HAP-1 (cell line): ENCODE measurements at regions of chr14 and their contacts with region 1.

Region 1: DNA sequence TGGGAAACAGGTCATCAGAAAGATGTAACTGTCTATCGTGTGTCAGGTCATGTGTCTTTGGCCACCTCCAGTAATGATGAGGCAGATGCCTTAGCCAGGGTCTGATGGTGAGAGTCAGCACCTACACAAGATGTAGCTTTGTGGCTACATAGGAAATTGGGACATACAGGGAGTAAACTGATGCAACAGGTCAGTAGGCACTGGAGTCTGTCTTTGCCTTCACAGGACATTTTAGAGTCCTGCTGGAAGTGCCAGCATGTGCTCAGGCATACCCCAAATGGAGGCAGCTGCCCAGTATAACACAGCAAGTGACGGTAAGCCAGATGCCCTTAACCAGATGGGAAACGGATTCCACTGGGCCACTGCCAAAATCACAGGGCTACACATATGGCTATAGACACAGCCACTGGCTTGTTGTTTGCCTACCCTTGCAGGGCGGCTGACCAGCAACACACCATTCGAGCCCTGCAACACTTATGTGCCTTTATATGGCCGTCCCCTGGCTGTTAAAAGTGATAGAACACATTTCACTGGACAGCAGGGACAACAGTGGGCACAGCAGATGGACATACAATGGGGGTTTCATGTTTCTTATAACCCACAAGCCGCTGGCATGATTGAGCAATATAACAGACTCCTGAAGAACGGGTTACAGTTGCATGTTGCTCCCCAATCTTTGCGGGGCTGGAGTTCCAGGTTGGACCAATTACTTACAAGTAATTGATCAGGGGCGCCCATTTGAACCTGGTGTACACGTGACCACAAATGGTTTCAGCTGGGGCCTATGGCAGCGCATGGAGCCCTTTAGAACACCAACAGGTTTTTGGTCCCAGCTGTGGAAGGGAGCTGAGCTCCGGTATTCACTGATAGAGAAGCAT is 12.9 kb upstream of the RNASE12 start:
- DNase-seq: no peak
- H3K4me3 ChIP-seq: no peak overlapping the region
- H3K4me1 ChIP-seq: peaks cover 6% of the 10 kb centered on the region
- H3K27me3 ChIP-seq: no peaks in the 10 kb centered on the region

Region 2: DNA sequence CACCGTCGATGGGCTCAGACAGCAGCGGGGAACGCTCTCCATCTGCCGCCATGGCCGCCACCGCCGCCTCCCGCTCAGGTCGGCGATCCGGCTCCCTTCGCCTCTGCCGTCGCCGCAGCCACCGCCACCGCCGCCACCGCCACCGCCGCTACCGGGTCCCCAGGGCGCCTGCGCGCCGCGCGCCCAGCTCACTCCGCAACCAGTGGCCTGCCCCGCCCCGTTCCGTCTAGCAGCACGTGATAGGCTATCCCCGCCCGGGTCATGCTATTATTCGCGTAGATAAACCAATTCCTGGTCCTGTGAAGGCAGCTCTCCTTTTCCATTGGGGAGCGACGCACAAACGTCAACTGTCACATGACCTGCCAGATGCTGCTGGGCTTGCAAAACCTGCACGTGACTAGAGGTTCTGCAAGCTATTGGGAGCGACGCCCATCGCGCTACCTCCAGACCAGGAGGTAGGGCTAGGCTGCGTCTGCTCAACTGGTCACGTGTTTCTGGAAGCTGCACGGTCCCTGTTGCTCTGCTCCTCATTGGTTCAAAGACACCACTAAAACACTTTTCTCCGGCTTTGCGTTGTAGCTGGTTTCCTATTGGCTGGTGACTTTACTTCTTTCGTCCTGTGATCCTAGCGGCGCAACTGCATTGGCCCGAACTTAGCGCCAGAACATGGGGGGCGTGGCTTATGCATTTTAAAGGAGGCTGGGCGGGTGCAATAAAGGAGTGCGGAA is 142.6 kb before region 1 on chr14 and contains the start of gene PIP4P1:
- in situ Hi-C with region 1: no loop called
- DNase-seq: peak; percentile 99 to 100
- H3K4me3 ChIP-seq: peak within 1 kb of the TSS; percentile 69
- H3K4me1 ChIP-seq: peaks cover 13% of the 10 kb centered on the region; the same call in 1 of the 2 replicates
- H3K27me3 ChIP-seq: no peaks in the 10 kb centered on the region

Region 3: GRCh38 chr14:20530771-20531571 is 73.1 kb before region 1 on chr14:
- in situ Hi-C with region 1: loop called (anchors 5 kb)
- DNase-seq: peak; percentile 83 to 85
- H3K4me3 ChIP-seq: no peak overlapping the region
- H3K4me1 ChIP-seq: no peaks in the 10 kb centered on the region; the same call in 1 of the 2 replicates
- H3K27me3 ChIP-seq: peaks cover 38% of the 10 kb centered on the region

Region 4: DNA sequence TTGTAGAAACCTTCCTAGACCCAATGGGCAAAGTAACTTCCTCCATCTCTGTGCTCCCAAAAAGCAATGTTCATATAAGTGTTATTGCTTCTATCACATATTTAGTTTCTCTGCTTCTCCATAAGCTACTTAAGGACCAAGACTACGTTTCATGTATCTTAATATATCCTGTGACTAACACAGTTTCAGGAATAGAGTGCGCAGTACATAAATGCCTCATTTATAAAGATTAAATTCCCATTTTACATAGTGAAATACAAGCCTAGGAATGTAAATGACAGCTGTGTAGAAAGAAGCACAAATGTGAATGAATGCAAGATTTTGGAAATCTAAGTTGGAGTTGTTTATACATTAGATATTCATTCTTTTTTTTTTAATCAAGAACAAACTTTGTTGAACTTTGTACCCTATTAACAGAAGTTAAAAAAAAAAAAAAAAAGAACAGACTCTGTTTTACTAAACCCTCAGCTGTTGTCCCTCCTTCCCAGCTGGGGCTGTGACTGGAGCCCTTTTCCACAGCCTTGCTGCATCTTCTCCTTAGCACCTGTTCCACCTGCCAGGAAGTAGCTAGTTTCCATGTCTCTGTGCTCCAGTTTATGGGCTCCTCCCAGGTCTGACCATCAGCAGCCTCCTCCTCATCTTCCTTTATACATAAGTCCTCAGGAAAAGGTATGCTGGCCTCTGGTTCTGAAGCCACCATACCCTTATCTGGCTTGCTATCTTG is 378.8 kb after region 1 on chr14:
- in situ Hi-C with region 1: no loop called
- DNase-seq: no peak
- H3K4me3 ChIP-seq: no peak overlapping the region
- H3K4me1 ChIP-seq: no peaks in the 10 kb centered on the region
- H3K27me3 ChIP-seq: peaks cover 14% of the 10 kb centered on the region; the same call in 1 of the 2 replicates